Activated CD8-positive, alpha-beta T cell treated with anti-CD3 and anti-CD28 coated beads for 36 hours (primary cell): ENCODE measurements at regions of chr5 and their contacts with region 1.

Region 1: DNA sequence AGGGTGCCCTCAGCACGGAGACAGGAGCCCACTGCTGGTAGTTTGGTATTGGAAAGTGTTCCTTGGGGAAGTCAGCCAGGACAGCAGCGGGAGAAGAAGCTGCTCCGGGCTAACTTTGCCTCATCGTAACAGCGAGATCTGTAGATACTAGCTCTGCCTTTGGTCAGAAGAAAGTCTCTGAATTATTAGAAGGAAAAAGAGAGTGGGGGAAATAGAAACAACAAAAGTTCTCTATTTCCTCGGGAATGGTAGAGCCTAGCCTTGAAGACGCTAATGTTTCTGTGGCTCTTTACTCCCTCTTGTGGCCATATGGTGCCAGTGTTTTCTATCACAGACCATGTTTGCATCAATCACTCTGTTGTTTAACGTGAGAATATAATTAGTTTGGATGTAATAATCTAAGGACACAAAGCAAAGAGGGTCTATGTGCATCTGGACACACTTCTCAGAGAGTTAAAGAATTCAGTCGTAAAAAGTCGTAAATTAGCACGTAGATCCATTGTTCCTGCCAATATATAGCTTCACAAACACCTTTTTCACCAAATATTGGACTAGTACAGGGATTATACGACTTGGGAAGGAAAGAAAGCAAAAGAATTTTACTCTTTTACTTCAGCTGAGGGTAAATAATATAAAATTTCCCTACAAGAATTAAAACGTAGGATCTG is 40.2 kb upstream of the HSD17B4 start:
- DNase-seq: peak; percentile 66
- ATAC-seq: peak; percentile 84
- H3K4me3 Mint-ChIP-seq: peak overlapping the region; percentile 78
- H3K27ac Mint-ChIP-seq: peak overlapping the region; percentile 80
- H3K4me1 Mint-ChIP-seq: peaks cover 41% of the 10 kb centered on the region
- H3K27me3 Mint-ChIP-seq: no peaks in the 10 kb centered on the region
- CTCF ChIP-seq: peak; percentile 93

Region 2: GRCh38 chr5:119031905-119032304 is 380.2 kb before region 1 on chr5:
- CTCF ChIA-PET with region 1: interaction called, 28 read pairs
- POLR2A ChIA-PET with region 1: no interaction called
- intact Hi-C with region 1: no loop called
- DNase-seq: peak; percentile 53
- ATAC-seq: peak; percentile 64
- H3K4me3 Mint-ChIP-seq: peak overlapping the region; percentile 28
- H3K27ac Mint-ChIP-seq: peak overlapping the region; percentile 91
- H3K4me1 Mint-ChIP-seq: peaks cover 31% of the 10 kb centered on the region
- H3K27me3 Mint-ChIP-seq: no peaks in the 10 kb centered on the region
- CTCF ChIP-seq: no peak

Region 3: DNA sequence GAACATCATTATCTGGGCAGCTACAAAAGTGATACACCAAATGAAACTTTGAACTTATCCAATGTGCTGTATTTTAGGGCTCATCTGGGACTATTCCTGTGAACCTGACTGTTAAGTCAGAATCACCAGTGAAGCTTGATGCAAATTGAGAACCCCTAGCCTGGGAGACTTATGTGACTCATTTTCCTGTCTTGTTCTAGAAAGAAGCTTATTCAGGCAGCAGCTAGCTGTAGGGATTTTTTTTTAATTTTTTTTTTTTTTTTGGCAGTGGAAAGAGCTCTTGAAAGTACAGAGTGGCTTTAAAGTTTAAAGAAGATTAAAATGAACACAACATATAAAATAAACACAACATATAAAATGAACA is 137.3 kb before region 1 on chr5:
- CTCF ChIA-PET with region 1: interaction called, 22 read pairs
- POLR2A ChIA-PET with region 1: interaction called, 3 read pairs
- intact Hi-C with region 1: loop called (anchors 5 kb)
- DNase-seq: no peak
- ATAC-seq: peak; percentile 67
- H3K4me3 Mint-ChIP-seq: peak overlapping the region; percentile 95
- H3K27ac Mint-ChIP-seq: peak overlapping the region; percentile 92
- H3K4me1 Mint-ChIP-seq: peaks cover 87% of the 10 kb centered on the region
- H3K27me3 Mint-ChIP-seq: no peaks in the 10 kb centered on the region
- CTCF ChIP-seq: no peak

Region 4: DNA sequence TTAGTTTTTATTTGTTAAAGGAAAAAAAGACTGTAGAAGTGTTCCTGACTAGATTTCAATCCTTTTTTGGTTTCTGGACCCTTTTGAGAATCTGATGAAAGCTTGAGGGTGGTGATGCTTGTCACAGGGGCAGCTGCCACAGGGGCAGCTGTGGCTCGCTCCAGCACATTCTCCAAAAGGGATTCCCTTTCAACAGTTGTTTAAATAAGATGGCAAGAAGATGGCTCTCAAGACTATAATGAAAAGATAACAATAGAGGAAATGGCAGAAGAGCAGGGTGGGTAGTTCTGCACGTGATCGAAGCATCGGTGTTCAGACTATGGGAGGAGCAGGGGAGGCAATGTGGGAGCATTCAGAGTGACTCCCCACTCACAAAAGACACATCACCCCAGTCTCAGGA is 102.7 kb before region 1 on chr5:
- CTCF ChIA-PET with region 1: interaction called, 92 read pairs
- POLR2A ChIA-PET with region 1: no interaction called
- intact Hi-C with region 1: no loop called
- DNase-seq: peak; percentile 27
- ATAC-seq: peak; percentile 4
- H3K4me3 Mint-ChIP-seq: peak overlapping the region; percentile 76
- H3K27ac Mint-ChIP-seq: peak overlapping the region; percentile 98
- H3K4me1 Mint-ChIP-seq: peaks cover 94% of the 10 kb centered on the region
- H3K27me3 Mint-ChIP-seq: no peaks in the 10 kb centered on the region
- CTCF ChIP-seq: no peak

Region 5: DNA sequence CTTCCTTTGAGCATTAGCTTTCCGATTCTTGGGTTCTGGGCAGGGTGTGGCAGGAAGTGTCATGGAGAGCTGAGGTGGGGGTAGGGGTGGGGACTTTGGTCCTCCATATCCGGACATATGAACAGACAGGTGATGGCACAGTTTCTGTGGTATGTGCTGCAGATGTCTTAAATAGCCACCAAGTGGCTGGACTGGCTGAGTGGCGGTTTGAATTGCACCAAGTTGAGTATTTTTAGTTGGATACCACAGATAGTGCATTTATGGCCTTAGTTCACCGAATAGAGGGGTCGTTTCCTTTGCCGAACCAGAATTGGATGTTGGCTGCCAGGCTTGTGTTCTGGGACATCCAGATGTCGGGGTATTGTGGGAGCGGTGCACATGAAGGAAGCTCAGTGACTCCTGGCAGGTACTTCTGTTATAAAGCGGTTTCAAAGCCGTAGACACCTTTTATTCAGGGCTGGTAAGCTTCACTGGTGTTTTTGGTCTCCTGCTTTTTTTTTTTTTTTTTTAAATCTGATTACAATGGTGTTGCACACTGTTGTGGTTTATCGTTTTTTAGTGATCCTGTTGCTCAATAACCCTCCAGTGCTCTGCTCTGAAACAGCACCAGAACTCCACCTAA is 71.4 kb before region 1 on chr5:
- CTCF ChIA-PET with region 1: interaction called, 29 read pairs
- POLR2A ChIA-PET with region 1: interaction called, 4 read pairs
- intact Hi-C with region 1: no loop called
- DNase-seq: peak; percentile 83
- ATAC-seq: peak; percentile 38
- H3K4me3 Mint-ChIP-seq: peak overlapping the region; percentile 73
- H3K27ac Mint-ChIP-seq: peak overlapping the region; percentile 95
- H3K4me1 Mint-ChIP-seq: peaks cover 94% of the 10 kb centered on the region
- H3K27me3 Mint-ChIP-seq: no peaks in the 10 kb centered on the region
- CTCF ChIP-seq: no peak

Region 6: GRCh38 chr5:119373449-119373858 is 38.6 kb before region 1 on chr5:
- CTCF ChIA-PET with region 1: interaction called, 28 read pairs
- POLR2A ChIA-PET with region 1: interaction called, 9 read pairs
- intact Hi-C with region 1: no loop called
- DNase-seq: no peak
- ATAC-seq: no peak
- H3K4me3 Mint-ChIP-seq: no peak overlapping the region
- H3K27ac Mint-ChIP-seq: peak overlapping the region; percentile 54
- H3K4me1 Mint-ChIP-seq: peaks cover 72% of the 10 kb centered on the region
- H3K27me3 Mint-ChIP-seq: no peaks in the 10 kb centered on the region
- CTCF ChIP-seq: no peak